GM12878 (cell line): ENCODE measurements at regions of chr2 and their contacts with region 1.

Region 1: GRCh38 chr2:98465456-98466226 is 21.0 kb downstream of the INPP4A start:
- DNase-seq: peak; percentile 91
- ATAC-seq: peak; percentile 58
- H3K4me3 ChIP-seq: peak overlapping the region; percentile 42; the same call in 1 of the 2 replicates
- H3K27ac ChIP-seq: peak overlapping the region; percentile 99
- H3K4me1 ChIP-seq: peaks cover 83% of the 10 kb centered on the region
- H3K27me3 ChIP-seq: no peaks in the 10 kb centered on the region
- CTCF ChIP-seq: no peak
- EP300 ChIP-seq: peak; percentile 49 to 59; a peak in 2 of 4 replicates
- POLR2A ChIP-seq: peak; percentile 39; the same call in 1 of the 2 replicates
- RAD21 ChIP-seq: 0 out of 2 replicates have a peak, but pooled peaks have one; percentile 1

Region 2: DNA sequence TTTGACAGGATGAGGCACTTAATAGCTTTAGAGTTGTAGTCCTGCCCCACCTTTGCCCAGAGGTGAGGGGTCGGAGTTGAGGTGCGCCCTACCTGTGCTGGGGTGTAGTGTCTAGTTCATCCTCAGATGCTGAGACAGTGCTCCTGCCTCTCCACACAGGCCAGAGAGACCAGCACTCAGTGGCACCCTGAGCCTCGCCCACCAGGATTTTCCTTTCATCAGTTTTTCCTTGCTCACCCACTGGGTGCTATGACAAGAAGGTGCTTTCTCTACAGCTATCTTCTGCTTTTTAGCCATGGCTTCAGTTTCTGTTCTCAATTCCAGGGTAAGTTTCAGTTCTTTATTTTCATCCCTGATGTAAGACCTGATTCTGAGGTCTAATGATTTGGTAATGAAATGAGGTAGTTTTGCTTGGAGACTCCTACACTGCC is 453.1 kb before region 1 on chr2:
- CTCF ChIA-PET with region 1: no interaction called
- POLR2A ChIA-PET with region 1: no interaction called
- RAD21 ChIA-PET with region 1: no interaction called
- SMC1A ChIA-PET with region 1: no interaction called
- in situ Hi-C with region 1: no loop called
- intact Hi-C with region 1: loop called (anchors 10 kb)
- DNase-seq: peak; percentile 88
- ATAC-seq: peak; percentile 83
- H3K4me3 ChIP-seq: peak overlapping the region; percentile 46
- H3K27ac ChIP-seq: peak overlapping the region; percentile 97
- H3K4me1 ChIP-seq: peaks cover 55% of the 10 kb centered on the region
- H3K27me3 ChIP-seq: no peaks in the 10 kb centered on the region
- CTCF ChIP-seq: no peak
- EP300 ChIP-seq: peak; percentile 85 to 99; a peak in 3 of 4 replicates
- POLR2A ChIP-seq: peak; percentile 59; the same call in 1 of the 2 replicates
- RAD21 ChIP-seq: 0 out of 2 replicates have a peak, but pooled peaks have one; percentile 24

Region 3: GRCh38 chr2:98444436-98445176 is 21.0 kb before region 1 on chr2 and contains the start of gene INPP4A:
- CTCF ChIA-PET with region 1: interaction called, 20 read pairs
- POLR2A ChIA-PET with region 1: interaction called, 271 read pairs
- RAD21 ChIA-PET with region 1: interaction called, 199 read pairs
- SMC1A ChIA-PET with region 1: interaction called, 425 read pairs
- in situ Hi-C with region 1: no loop called
- intact Hi-C with region 1: loop called (anchors 1 kb)
- DNase-seq: no peak
- ATAC-seq: peak; percentile 71
- H3K4me3 ChIP-seq: peak within 1 kb of the TSS; percentile 86
- H3K27ac ChIP-seq: peak within 1 kb of the TSS; percentile 83
- H3K4me1 ChIP-seq: no peaks in the 10 kb centered on the region
- H3K27me3 ChIP-seq: no peaks in the 10 kb centered on the region
- CTCF ChIP-seq: peak in 1 of 3 experiments; percentile 13; a peak in 1 of 6 replicates
- EP300 ChIP-seq: no peak
- POLR2A ChIP-seq: peak; percentile 80
- RAD21 ChIP-seq: peak; percentile 32; the same call in 1 of the 2 replicates
- polyA plus RNA-seq, gene INPP4A: 4.7 to 6.2 TPM

Region 4: GRCh38 chr2:98479959-98480524 is 14.4 kb after region 1 on chr2:
- CTCF ChIA-PET with region 1: interaction called, 64 read pairs
- POLR2A ChIA-PET with region 1: interaction called, 545 read pairs
- RAD21 ChIA-PET with region 1: interaction called, 200 read pairs
- SMC1A ChIA-PET with region 1: interaction called, 816 read pairs
- in situ Hi-C with region 1: no loop called
- intact Hi-C with region 1: loop called (anchors 1 kb)
- DNase-seq: no peak
- ATAC-seq: peak; percentile 53
- H3K4me3 ChIP-seq: 0 out of 2 replicates have a peak overlapping the region, but pooled peaks have one; percentile 10
- H3K27ac ChIP-seq: peak overlapping the region; percentile 89
- H3K4me1 ChIP-seq: peaks cover 98% of the 10 kb centered on the region
- H3K27me3 ChIP-seq: no peaks in the 10 kb centered on the region
- CTCF ChIP-seq: no peak
- EP300 ChIP-seq: no peak
- POLR2A ChIP-seq: no peak; the same call in 1 of the 2 replicates
- RAD21 ChIP-seq: no peak

Region 5: DNA sequence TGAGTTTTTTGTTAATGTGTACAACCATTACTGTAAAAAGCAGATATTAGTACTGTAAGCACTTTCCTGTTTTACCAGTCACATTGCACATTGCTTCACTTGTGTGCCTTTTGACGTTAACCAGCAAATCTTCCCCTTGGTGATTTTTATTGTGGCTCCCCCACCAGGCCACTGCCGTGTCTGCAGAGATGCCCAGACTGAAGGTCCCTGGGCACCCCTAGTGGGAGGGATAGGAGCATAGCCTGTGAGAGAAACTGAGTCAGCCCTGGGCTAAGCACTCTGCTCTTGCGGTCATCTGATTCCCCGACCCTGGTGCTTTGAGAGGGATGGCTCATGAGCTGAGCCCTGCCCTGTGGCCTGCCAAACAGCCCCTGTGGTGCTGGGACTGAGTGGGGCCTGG is 52.4 kb after region 1 on chr2:
- CTCF ChIA-PET with region 1: interaction called, 17 read pairs
- POLR2A ChIA-PET with region 1: no interaction called
- RAD21 ChIA-PET with region 1: interaction called, 5 read pairs
- SMC1A ChIA-PET with region 1: interaction called, 4 read pairs
- in situ Hi-C with region 1: no loop called
- intact Hi-C with region 1: no loop called
- DNase-seq: no peak
- ATAC-seq: peak; percentile 84
- H3K4me3 ChIP-seq: no peak overlapping the region
- H3K27ac ChIP-seq: no peak overlapping the region; the same call in 1 of the 2 replicates
- H3K4me1 ChIP-seq: peaks cover 20% of the 10 kb centered on the region
- H3K27me3 ChIP-seq: no peaks in the 10 kb centered on the region
- CTCF ChIP-seq: peak; percentile 69 to 88 (median 71)
- EP300 ChIP-seq: no peak
- POLR2A ChIP-seq: no peak
- RAD21 ChIP-seq: peak; percentile 81

Region 6: GRCh38 chr2:98608116-98608999 is 142.7 kb after region 1 on chr2 and contains the starts of genes COA5 and UNC50:
- CTCF ChIA-PET with region 1: no interaction called
- POLR2A ChIA-PET with region 1: no interaction called
- RAD21 ChIA-PET with region 1: no interaction called
- SMC1A ChIA-PET with region 1: no interaction called
- in situ Hi-C with region 1: no loop called
- intact Hi-C with region 1: loop called (anchors 5 kb)
- DNase-seq: peak; percentile 37
- ATAC-seq: peak; percentile 88
- H3K4me3 ChIP-seq: peak within 1 kb of the TSS; percentile 87
- H3K27ac ChIP-seq: peak within 1 kb of the TSS; percentile 84
- H3K4me1 ChIP-seq: peaks cover 9% of the 10 kb centered on the region
- H3K27me3 ChIP-seq: no peaks in the 10 kb centered on the region
- CTCF ChIP-seq: no peak
- EP300 ChIP-seq: no peak
- POLR2A ChIP-seq: peak; percentile 99
- RAD21 ChIP-seq: no peak
- polyA plus RNA-seq, gene COA5: 21.4 to 40.3 TPM
- polyA plus RNA-seq, gene UNC50: 40.8 to 59.5 TPM